WTC11 (cell line): ENCODE measurements at regions of chr7 and their contacts with region 1.

Region 1: DNA sequence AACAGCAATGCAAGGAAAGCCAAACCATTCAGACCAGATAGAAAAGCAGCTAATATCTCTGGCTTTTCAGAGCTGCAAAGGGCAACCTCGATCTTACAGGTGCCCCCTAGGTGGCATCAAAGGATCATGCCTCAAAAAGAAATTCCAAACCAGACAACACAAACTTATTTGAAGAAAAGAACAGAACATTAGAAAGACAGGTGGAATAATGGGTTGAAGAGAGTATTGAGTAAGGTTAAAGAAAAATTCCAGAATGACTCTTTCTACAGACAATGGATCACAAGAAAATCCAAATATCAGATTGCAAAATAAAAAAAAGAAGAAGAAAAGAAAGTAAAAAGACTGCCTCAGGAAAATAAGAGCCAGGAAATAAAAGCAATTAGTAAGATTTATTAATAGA is 213.7 kb downstream of the ELMO1 start:
- DNase-seq: no peak
- ATAC-seq: peak; percentile 80
- H3K4me3 Mint-ChIP-seq: no peak overlapping the region
- H3K27ac Mint-ChIP-seq: peak overlapping the region; percentile 6; the same call in 1 of the 2 replicates
- H3K4me1 Mint-ChIP-seq: peaks cover 11% of the 10 kb centered on the region
- H3K27me3 Mint-ChIP-seq: no peaks in the 10 kb centered on the region; the same call in 1 of the 2 replicates
- CTCF ChIP-seq: no peak; the same call in 1 of the 2 replicates

Region 2: DNA sequence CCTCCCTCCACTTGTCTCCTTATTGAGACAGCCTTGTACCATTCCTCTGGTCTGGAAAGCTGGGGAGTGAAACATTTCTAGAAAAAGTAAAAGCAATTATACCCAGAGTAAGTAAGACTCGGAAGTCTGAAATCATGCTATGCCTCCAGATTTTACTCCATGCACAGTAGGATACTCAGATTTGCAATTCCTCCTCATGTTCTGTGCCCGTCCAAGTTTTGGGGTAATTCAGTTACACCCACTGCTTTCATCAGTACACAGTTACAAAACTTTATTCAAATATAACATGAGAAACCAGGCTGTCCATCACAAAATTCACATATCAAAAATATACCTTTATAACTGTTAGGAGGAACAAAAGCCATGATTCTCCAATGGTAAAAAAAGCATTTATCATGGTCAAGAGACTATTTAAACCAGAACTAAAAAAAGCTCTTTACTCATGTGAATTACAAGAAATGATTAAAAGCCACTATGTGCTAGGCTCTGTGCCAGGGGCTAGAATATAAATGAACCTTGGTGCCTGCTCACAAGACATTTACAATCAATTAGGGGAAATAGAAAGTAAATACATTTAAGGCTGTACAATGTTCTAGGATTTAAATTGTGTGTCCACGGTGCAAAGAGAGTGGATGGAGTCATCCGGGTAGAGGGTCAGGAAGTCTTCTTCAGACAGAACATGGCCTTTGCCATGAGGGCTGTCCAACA is 106.4 kb before region 1 on chr7:
- CTCF ChIA-PET with region 1: no interaction called
- POLR2A ChIA-PET with region 1: no interaction called
- DNase-seq: no peak
- ATAC-seq: no peak
- H3K4me3 Mint-ChIP-seq: no peak overlapping the region
- H3K27ac Mint-ChIP-seq: no peak overlapping the region
- H3K4me1 Mint-ChIP-seq: no peaks in the 10 kb centered on the region
- H3K27me3 Mint-ChIP-seq: no peaks in the 10 kb centered on the region
- CTCF ChIP-seq: no peak

Region 3: DNA sequence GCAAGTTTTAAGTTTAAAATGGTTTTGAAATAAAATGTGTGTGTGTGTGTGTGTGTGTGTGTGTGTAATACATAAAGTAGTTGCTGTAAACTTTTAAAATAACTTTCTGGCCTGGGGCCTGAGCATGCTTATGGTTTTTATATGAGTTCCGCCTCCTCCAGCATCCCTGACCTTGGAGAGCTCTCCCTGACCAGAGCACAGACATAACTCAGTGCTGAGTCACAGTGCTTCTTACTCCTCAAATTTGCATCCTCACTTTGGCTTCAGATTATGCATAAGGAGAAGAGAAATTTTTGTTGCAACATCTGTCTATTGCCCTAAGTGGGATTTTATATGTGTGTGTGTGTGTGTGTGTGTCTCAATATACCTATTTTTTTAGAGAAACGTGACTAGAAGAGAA is 12.9 kb after region 1 on chr7:
- CTCF ChIA-PET with region 1: interaction called, 27 read pairs
- POLR2A ChIA-PET with region 1: no interaction called
- DNase-seq: peak; percentile 26
- ATAC-seq: peak; percentile 83
- H3K4me3 Mint-ChIP-seq: peak overlapping the region; percentile 41
- H3K27ac Mint-ChIP-seq: peak overlapping the region; percentile 99
- H3K4me1 Mint-ChIP-seq: peaks cover 64% of the 10 kb centered on the region
- H3K27me3 Mint-ChIP-seq: no peaks in the 10 kb centered on the region
- CTCF ChIP-seq: no peak

Region 4: DNA sequence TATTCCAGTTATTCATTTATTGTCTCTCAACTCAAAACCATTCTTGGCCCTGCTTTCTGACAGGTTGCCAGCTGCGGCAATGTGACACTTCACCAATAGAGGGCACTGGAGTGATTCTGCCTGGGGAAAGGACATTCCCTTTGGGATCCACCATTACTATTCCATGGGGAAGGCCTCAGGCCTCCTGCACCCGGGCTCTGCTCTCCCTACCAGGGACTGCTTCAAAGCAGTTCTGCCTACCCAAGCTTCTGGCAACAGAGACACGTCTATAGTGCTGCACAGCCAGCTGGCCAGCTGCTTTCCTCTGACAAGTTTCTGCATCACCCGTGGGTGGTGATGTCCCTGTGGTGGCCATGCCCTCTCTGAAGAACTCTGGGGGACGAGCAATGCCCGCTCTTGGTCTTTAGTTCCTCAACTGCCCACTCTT is 49.9 kb after region 1 on chr7:
- CTCF ChIA-PET with region 1: interaction called, 11 read pairs
- POLR2A ChIA-PET with region 1: no interaction called
- DNase-seq: peak; percentile 80
- ATAC-seq: peak; percentile 89
- H3K4me3 Mint-ChIP-seq: no peak overlapping the region
- H3K27ac Mint-ChIP-seq: no peak overlapping the region
- H3K4me1 Mint-ChIP-seq: peaks cover 39% of the 10 kb centered on the region
- H3K27me3 Mint-ChIP-seq: no peaks in the 10 kb centered on the region
- CTCF ChIP-seq: peak; percentile 80

Region 5: DNA sequence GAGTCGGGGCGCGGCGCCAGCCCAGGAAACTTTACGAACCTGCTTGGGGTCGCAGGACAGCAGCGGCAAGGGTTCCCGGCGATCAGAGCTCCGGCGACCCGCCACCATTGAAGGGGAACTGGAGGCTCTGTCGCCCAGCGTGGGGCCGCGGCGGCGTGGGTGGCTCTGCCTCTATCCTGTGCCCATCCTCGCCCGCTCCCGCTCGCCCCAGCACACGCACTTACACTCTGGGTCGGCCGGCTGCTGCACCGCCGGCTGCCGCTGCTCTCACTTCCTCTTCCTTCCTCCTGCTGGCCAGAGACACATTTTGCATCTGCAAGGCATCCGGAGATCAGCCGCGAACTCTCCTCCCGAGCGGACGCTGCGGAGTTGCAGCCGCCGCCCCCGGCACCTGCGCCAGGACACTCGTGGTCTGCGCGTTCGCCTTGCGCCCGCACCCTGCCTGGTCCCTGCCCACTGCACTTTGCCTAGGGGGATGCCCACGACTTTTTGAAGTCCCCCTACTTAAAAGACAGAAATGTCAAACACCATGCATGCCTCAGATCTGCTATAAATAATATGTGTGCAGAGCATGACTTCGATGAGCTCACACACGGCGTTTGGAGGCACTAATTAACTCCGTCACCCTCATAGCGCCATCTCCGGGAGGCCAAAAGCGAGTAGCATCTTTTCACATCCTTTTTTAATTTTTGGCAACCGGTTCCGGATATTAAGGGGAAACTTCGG is 213.9 kb after region 1 on chr7 and contains the start of gene ELMO1:
- CTCF ChIA-PET with region 1: interaction called, 10 read pairs
- POLR2A ChIA-PET with region 1: no interaction called
- DNase-seq: peak; percentile 81
- ATAC-seq: peak; percentile 87
- H3K4me3 Mint-ChIP-seq: peak within 1 kb of the TSS; percentile 82
- H3K27ac Mint-ChIP-seq: peak within 1 kb of the TSS; percentile 57
- H3K4me1 Mint-ChIP-seq: peaks cover 44% of the 10 kb centered on the region
- H3K27me3 Mint-ChIP-seq: peaks cover 10% of the 10 kb centered on the region
- CTCF ChIP-seq: 0 out of 2 replicates have a peak, but pooled peaks have one; percentile 32
- total RNA-seq, gene ELMO1: 17.8 to 19.4 TPM (median 17.9 TPM) in 3 replicates

Region 6: GRCh38 chr7:37510043-37510634 is 275.2 kb after region 1 on chr7:
- CTCF ChIA-PET with region 1: interaction called, 18 read pairs
- POLR2A ChIA-PET with region 1: no interaction called
- DNase-seq: no peak
- ATAC-seq: peak; percentile 61; the same call in 1 of the 2 replicates
- H3K4me3 Mint-ChIP-seq: no peak overlapping the region
- H3K27ac Mint-ChIP-seq: no peak overlapping the region
- H3K4me1 Mint-ChIP-seq: peaks cover 30% of the 10 kb centered on the region
- H3K27me3 Mint-ChIP-seq: no peaks in the 10 kb centered on the region
- CTCF ChIP-seq: peak; percentile 48; the same call in 1 of the 2 replicates

Region 7: DNA sequence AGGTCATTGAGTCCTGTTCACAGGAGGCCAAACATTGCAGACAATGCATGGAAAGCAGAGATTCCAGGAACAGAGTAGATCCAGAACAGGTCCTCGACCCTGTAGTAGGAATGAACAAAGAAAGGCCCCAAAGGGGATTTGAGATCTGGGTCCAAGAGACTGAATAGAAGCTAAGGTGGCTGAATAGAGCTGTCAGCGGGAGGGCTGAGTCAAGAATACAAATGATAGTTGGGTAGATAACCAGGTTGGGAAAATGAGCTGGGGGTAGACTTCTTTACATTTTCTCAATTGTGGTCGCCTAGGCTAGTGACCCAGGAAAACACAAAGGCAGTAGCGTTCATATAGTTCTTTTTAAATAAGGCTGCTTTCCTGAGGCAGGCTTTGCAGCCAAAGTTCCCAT is 317.1 kb after region 1 on chr7:
- CTCF ChIA-PET with region 1: no interaction called
- POLR2A ChIA-PET with region 1: no interaction called
- DNase-seq: no peak
- ATAC-seq: no peak
- H3K4me3 Mint-ChIP-seq: no peak overlapping the region
- H3K27ac Mint-ChIP-seq: no peak overlapping the region
- H3K4me1 Mint-ChIP-seq: peaks cover 26% of the 10 kb centered on the region
- H3K27me3 Mint-ChIP-seq: no peaks in the 10 kb centered on the region; the same call in 1 of the 2 replicates
- CTCF ChIP-seq: no peak